Activated T-helper 2 cell treated with anti-CD3 and anti-CD28 coated beads, Interferon-gamma antibody, Interleukin-2, Interleukin-4, amounts not matched to agents 10 μg/mL and 5 μg/mL and 100 μg/mL, durations not matched to agents 14 hours and 24 hours and 36 hours (primary cell): ENCODE measurements at regions of chr6 and their contacts with region 1.

Region 1: GRCh38 chr6:70667711-70668498 is at the start of gene SMAP1:
- DNase-seq: peak; percentile 90
- H3K4me3 Mint-ChIP-seq: peak within 1 kb of the TSS; percentile 90
- H3K27ac Mint-ChIP-seq: peak within 1 kb of the TSS; percentile 83
- H3K4me1 Mint-ChIP-seq: peaks cover 52% of the 10 kb centered on the region
- H3K27me3 Mint-ChIP-seq: no peaks in the 10 kb centered on the region
- total RNA-seq, gene SMAP1: 25.9 and 26.0 TPM in 2 replicates

Region 2: GRCh38 chr6:70413114-70413991 is 254.6 kb before region 1 on chr6 and contains the start of gene FAM135A:
- intact Hi-C with region 1: loop called (anchors 5 kb)
- DNase-seq: peak; percentile 91
- H3K4me3 Mint-ChIP-seq: peak within 1 kb of the TSS; percentile 98
- H3K27ac Mint-ChIP-seq: peak within 1 kb of the TSS; percentile 90
- H3K4me1 Mint-ChIP-seq: peaks cover 25% of the 10 kb centered on the region
- H3K27me3 Mint-ChIP-seq: peaks cover 14% of the 10 kb centered on the region
- total RNA-seq, gene FAM135A: 8.0 and 9.4 TPM in 2 replicates

Region 3: DNA sequence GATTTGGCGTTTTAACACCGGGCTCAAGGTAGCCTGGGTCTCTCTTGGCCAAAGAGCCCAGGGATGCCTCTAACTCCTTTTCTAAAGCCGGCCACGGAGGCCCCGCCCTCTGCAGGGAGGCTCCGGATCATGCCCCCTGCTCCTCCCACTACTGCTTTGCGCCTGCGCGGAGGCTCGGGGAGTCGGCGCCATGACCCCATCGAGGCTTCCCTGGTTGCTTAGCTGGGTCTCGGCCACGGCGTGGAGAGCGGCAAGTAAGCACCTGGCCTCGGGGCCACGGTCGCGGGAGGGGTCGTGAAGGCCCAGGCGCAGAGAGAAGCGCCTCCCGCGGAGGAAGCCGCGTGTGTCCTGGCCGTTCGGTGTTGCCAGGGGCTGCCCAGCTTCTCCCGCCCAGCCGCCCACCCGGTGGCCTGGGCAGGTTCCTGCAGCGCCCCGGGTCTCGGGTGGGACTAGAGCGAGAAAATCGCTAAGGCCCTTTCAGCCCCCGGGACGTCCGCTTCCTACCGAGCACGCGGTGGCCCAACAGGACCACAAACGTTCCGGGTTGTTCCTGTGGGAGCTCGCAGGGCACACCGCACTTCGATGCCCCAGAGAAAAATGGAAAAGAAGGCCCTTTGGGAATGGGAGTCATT is 101.0 kb before region 1 on chr6 and contains the start of gene SDHAF4:
- intact Hi-C with region 1: loop called (anchors 5 kb)
- DNase-seq: peak; percentile 90
- H3K4me3 Mint-ChIP-seq: peak within 1 kb of the TSS; percentile 85
- H3K27ac Mint-ChIP-seq: peak within 1 kb of the TSS; percentile 80
- H3K4me1 Mint-ChIP-seq: peaks cover 12% of the 10 kb centered on the region
- H3K27me3 Mint-ChIP-seq: no peaks in the 10 kb centered on the region
- total RNA-seq, gene SDHAF4: 10.6 and 12.1 TPM in 2 replicates

Region 4: GRCh38 chr6:70629929-70630328 is 38.0 kb before region 1 on chr6:
- intact Hi-C with region 1: loop called (anchors 5 kb)
- DNase-seq: no peak
- H3K4me3 Mint-ChIP-seq: no peak overlapping the region
- H3K27ac Mint-ChIP-seq: no peak overlapping the region
- H3K4me1 Mint-ChIP-seq: peaks cover 8% of the 10 kb centered on the region
- H3K27me3 Mint-ChIP-seq: peaks cover 8% of the 10 kb centered on the region

Region 5: DNA sequence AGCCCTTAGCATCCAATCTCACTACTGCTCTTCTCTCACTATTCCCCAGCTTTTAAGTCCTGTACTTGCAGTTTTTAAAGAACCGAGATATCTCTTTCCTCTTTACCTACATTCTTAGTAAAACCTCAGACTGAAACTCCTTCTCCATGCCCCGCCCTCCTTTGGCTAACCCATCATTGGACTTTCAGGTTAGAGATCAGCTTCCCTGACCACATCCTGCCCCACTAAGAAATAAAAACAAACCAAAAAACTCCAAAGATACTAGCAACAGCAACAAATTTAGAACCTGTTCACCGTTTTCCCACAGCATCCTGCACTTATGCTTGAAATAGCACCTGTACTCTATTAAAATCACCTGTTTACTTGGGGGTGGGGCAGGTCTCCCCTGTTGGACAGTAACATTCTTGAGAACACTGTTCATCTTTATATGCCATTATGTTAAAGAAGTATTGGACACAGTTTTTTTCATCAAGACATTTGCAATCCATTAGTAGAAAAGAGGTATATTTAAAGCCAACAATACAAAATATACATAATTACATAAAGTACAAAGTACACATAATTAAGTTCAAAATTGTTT is 16.5 kb before region 1 on chr6:
- intact Hi-C with region 1: loop called (anchors 1 kb)
- DNase-seq: peak; percentile 74
- H3K4me3 Mint-ChIP-seq: no peak overlapping the region
- H3K27ac Mint-ChIP-seq: peak overlapping the region; percentile 5
- H3K4me1 Mint-ChIP-seq: peaks cover 35% of the 10 kb centered on the region
- H3K27me3 Mint-ChIP-seq: no peaks in the 10 kb centered on the region

Region 6: GRCh38 chr6:70686548-70687133 is 18.7 kb after region 1 on chr6:
- intact Hi-C with region 1: loop called (anchors 2 kb)
- DNase-seq: no peak
- H3K4me3 Mint-ChIP-seq: no peak overlapping the region
- H3K27ac Mint-ChIP-seq: no peak overlapping the region
- H3K4me1 Mint-ChIP-seq: peaks cover 25% of the 10 kb centered on the region
- H3K27me3 Mint-ChIP-seq: no peaks in the 10 kb centered on the region

Region 7: DNA sequence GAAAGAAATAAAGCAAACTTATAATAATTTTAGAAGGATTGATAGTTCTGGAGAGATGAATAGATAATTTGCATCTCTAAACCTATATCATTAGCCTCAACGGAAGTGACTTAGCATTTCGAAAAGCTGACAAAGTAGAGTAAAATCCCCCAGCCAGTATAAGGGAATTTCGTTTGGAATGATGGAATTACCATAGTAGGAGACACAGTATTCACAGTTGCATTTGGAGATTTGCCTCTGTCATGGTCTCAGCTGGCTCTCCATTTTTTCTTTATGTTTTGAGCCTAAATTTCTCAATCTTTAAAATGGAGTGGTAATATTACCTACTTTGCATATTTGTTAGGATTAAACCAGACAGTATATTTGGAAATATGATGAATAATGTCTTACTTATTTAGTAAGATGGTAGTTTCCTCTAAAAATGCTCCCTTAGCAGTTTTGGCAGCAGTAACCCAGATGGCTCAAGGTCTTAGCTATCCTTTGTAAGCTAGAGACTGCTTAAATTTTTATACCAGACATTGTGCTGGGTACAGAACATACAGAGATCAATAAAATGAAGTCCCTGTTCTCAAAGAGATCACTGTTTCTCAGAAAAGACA is 58.0 kb after region 1 on chr6:
- intact Hi-C with region 1: no loop called
- DNase-seq: no peak
- H3K4me3 Mint-ChIP-seq: no peak overlapping the region
- H3K27ac Mint-ChIP-seq: no peak overlapping the region
- H3K4me1 Mint-ChIP-seq: peaks cover 4% of the 10 kb centered on the region
- H3K27me3 Mint-ChIP-seq: no peaks in the 10 kb centered on the region